Activated CD8-positive, alpha-beta memory T cell treated with anti-CD3 and anti-CD28 coated beads, Interleukin-2, amount 10 ng/mL, durations not matched to agents 7 days and 5 days (primary cell): ENCODE measurements at regions of chr6 and their contacts with region 1.

Region 1: GRCh38 chr6:160137989-160138835 is 16.6 kb downstream of the SLC22A1 start:
- DNase-seq: peak; percentile 80
- ATAC-seq: peak; percentile 79
- H3K4me3 Mint-ChIP-seq: no peak overlapping the region
- H3K27ac Mint-ChIP-seq: no peak overlapping the region
- H3K4me1 Mint-ChIP-seq: peaks cover 11% of the 10 kb centered on the region
- H3K27me3 Mint-ChIP-seq: no peaks in the 10 kb centered on the region

Region 2: DNA sequence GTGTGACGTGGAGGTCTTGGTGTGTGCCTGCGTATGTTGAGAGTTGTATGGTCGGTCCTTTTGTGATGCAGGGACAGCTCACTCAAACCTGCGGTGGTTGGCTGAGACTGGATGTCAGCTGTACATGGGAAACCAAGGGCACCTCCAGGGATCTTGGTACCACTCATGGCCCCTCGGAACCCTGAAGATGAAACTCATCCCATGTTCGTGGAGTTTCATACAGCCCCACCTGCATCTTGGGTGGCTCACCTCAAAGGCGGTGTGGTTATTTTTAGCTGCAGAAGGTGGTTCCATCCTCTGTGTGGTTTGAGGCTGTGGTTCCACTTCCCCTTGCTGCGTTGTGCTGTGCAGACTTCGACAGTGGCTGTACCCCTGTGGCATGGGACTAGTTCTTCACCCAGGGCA is 69.2 kb before region 1 on chr6:
- CTCF ChIA-PET with region 1: no interaction called
- DNase-seq: peak; percentile 86
- ATAC-seq: peak; percentile 71
- H3K4me3 Mint-ChIP-seq: peak overlapping the region; percentile 16
- H3K27ac Mint-ChIP-seq: peak overlapping the region; percentile 21
- H3K4me1 Mint-ChIP-seq: peaks cover 35% of the 10 kb centered on the region
- H3K27me3 Mint-ChIP-seq: no peaks in the 10 kb centered on the region

Region 3: GRCh38 chr6:160455541-160456213 is 317.5 kb after region 1 on chr6:
- CTCF ChIA-PET with region 1: interaction called, 31 read pairs
- DNase-seq: peak; percentile 78
- ATAC-seq: peak; percentile 90
- H3K4me3 Mint-ChIP-seq: no peak overlapping the region
- H3K27ac Mint-ChIP-seq: no peak overlapping the region
- H3K4me1 Mint-ChIP-seq: peaks cover 20% of the 10 kb centered on the region
- H3K27me3 Mint-ChIP-seq: peaks cover 6% of the 10 kb centered on the region